ENCODE measurements at regions of chr16 and their contacts with region 1.

Region 1: GRCh38 chr16:72124761-72125634 is 31.4 kb downstream of the DHX38 start:
- DNase-seq: peak; percentile 69

Region 2: DNA sequence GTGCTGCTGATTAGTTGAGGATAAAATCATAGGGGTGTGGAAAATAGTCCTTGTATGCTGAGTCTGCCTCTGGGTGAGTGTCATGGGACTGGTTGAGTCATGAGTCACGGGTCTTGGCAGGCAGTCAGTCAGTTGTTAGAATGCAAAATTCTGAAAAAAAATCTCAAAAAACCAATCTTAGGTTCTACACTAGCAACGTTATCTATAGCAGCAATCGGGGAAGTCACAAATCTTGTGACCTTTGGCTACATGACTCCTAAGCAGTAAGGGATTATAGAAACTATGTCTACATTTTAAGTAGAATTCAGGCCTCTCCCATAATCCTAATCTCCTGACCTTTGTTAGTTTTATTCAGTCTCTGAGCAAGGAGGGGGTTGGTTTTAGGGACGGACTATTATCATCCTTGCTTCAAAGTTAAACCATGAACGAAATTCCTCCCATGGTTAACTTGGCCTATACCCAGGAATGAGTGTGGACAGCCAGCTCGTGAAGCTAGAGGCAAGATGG is 64.9 kb after region 1 on chr16:
- in situ Hi-C with region 1: loop called (anchors 5 kb)
- DNase-seq: peak; percentile 35